PC-9 (cell line): ENCODE measurements at regions of chr7 and their contacts with region 1.

Region 1: GRCh38 chr7:24979863-24980533 is at the start of gene OSBPL3:
- DNase-seq: peak; percentile 90 to 98
- H3K4me3 ChIP-seq: peak within 1 kb of the TSS; percentile 63
- H3K27ac ChIP-seq: peak within 1 kb of the TSS; percentile 77
- H3K4me1 ChIP-seq: peaks cover 24% of the 10 kb centered on the region
- H3K27me3 ChIP-seq: no peaks in the 10 kb centered on the region
- CTCF ChIP-seq: no peak
- total RNA-seq, gene OSBPL3: 87.6 and 88.4 TPM in 2 replicates

Region 2: DNA sequence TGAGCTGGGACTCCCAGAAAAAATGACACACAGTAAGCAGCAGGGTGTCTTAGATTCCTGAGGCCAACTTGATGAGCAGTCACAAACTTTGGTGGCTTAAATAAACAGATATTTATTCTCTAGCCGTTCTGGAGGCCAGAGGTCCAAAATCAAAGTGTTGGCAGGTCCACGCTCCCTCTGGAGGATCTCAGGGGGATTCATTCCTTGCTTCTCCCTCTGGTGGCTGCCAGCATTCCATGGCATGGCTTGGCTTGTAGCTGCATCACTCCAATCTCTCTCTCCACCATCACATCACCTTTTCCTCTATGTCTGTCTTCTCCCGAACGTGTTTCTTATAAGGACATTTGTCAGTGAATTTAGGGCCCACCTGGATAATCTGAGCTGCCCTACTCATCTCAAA is 98.4 kb before region 1 on chr7:
- CTCF ChIA-PET with region 1: interaction called, 10 read pairs
- POLR2A ChIA-PET with region 1: interaction called, 4 read pairs
- intact Hi-C with region 1: no loop called
- DNase-seq: no peak
- H3K4me3 ChIP-seq: no peak overlapping the region
- H3K27ac ChIP-seq: no peak overlapping the region
- H3K4me1 ChIP-seq: 0 out of 2 replicates have a peak, but pooled peaks cover 10% of the 10 kb centered on the region
- H3K27me3 ChIP-seq: no peaks in the 10 kb centered on the region
- CTCF ChIP-seq: no peak

Region 3: GRCh38 chr7:25002786-25003185 is 22.8 kb after region 1 on chr7:
- CTCF ChIA-PET with region 1: no interaction called
- POLR2A ChIA-PET with region 1: no interaction called
- intact Hi-C with region 1: loop called (anchors 2 kb)
- DNase-seq: no peak
- H3K4me3 ChIP-seq: no peak overlapping the region
- H3K27ac ChIP-seq: no peak overlapping the region
- H3K4me1 ChIP-seq: no peaks in the 10 kb centered on the region
- H3K27me3 ChIP-seq: no peaks in the 10 kb centered on the region
- CTCF ChIP-seq: no peak

Region 4: GRCh38 chr7:25069900-25070443 is 90.0 kb after region 1 on chr7:
- CTCF ChIA-PET with region 1: interaction called, 8 read pairs
- POLR2A ChIA-PET with region 1: interaction called, 12 read pairs
- intact Hi-C with region 1: loop called (anchors 1 kb)
- DNase-seq: peak; percentile 67 to 76
- H3K4me3 ChIP-seq: no peak overlapping the region
- H3K27ac ChIP-seq: no peak overlapping the region
- H3K4me1 ChIP-seq: peaks cover 5% of the 10 kb centered on the region
- H3K27me3 ChIP-seq: no peaks in the 10 kb centered on the region
- CTCF ChIP-seq: peak; percentile 96

Region 5: DNA sequence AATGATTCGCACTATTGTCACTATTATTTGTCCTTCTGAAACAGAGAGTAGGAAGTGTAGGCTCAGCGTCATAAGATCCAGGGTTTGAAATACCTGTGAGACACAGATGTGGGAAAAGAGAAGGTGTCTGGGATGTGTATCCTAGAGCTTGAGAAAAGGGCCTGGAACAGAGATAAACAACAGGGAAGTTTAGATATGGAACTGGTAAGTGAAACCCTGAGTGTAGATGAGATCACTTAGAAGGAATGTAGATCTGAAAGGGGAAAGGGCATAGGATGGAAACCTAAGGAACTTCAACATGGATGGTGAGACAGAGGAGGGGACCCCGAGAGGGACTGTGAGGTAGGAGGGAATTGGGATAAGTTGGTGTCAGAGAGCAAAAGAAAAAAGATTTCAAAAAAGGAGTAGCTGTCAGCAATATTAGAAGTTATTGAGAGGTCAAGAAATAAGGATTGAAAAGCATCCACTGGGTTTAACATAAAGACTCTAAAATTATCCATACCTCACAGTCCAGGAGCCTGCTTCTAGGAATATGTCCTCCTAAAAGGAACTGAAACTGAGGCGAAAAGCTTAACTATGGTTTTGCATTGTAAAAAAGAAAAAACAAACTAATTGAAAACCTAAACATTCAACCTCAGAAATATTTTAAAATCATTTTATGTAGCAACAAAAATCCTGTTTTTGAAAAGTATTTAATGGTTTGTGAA is 367.5 kb after region 1 on chr7:
- CTCF ChIA-PET with region 1: no interaction called
- POLR2A ChIA-PET with region 1: no interaction called
- intact Hi-C with region 1: no loop called
- DNase-seq: no peak
- H3K4me3 ChIP-seq: no peak overlapping the region
- H3K27ac ChIP-seq: no peak overlapping the region
- H3K4me1 ChIP-seq: no peaks in the 10 kb centered on the region
- H3K27me3 ChIP-seq: peaks cover 49% of the 10 kb centered on the region
- CTCF ChIP-seq: no peak